ENCODE measurements at regions of chr6 and their contacts with region 1.

Region 1: DNA sequence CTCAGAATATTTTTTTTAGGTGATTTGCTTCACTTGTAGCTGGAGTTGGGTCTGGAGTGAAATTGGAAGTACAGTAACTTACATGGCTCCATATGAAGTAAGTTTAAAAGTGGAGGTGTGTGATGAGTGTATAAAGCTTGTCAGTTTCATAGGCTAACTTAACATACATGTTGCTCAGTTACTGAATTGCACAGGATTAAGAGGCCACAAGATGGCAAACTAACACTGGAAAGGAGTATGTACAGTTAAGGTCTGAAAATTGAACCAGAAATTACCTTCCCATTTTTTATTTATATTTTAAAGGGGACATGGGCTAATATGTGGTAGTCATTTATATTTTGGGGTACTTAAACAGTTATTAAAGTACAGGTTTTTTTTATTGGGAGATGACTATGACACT is 45.3 kb upstream of the SMIM8 start:
- DNase-seq: no peak
- ATAC-seq: peak; percentile 63
- H3K4me3 ChIP-seq: no peak overlapping the region
- H3K27ac ChIP-seq: no peak overlapping the region
- H3K4me1 ChIP-seq: no peaks in the 10 kb centered on the region
- H3K27me3 ChIP-seq: no peaks in the 10 kb centered on the region
- CTCF ChIP-seq: peak in 2 of 3 experiments; percentile 21 to 41; a peak in 2 of 6 replicates
- EP300 ChIP-seq: no peak
- POLR2A ChIP-seq: no peak
- RAD21 ChIP-seq: peak; percentile 46

Region 2: DNA sequence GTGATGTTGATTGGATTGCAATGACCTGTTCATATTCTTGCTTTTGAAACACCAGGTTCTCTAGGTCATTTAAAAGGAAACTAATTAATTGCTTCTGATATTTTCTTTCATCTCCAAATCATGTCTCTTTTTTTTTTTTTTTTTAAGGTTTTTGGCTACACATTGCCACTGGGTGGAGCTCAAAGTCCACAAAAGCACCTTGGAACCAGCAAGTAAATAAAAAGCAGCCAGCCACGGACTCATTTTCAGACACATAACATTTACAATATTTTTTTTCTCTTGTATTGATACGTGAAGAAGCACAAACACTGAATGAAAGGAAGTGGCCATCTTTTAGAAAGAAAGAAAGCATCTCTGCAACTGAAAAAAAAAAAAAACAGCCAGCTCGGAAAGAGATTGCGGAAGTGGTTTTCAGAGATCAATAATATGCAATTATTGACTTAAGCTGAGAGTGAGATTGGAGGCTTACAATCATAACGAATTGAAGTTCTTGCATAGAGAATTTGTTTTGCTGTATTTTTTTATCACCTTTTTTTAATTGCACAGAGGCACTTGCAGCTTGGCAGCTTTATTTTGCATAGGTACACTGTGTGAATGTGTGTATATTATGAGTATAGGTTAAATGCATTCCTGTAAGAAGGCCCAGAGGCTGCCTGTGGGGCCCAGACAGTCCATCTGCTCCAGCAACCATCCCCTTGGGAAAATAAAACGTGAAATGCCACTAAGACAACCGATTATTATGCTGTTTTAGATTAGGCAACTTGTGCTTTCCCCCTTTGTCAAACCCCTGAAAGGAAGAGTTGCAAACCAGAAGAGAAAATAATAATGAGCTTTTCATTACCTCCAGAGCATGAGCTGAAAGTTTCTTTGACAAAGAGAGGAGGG is 210.4 kb before region 1 on chr6:
- CTCF ChIA-PET with region 1: interaction called, 7 read pairs
- POLR2A ChIA-PET with region 1: no interaction called
- RAD21 ChIA-PET with region 1: no interaction called
- SMC1A ChIA-PET with region 1: no interaction called
- in situ Hi-C with region 1: no loop called
- intact Hi-C with region 1: loop called (anchors 10 kb)
- DNase-seq: peak; percentile 28
- ATAC-seq: peak; percentile 53; the same call in 2 of the 3 replicates
- H3K4me3 ChIP-seq: no peak overlapping the region
- H3K27ac ChIP-seq: no peak overlapping the region
- H3K4me1 ChIP-seq: peaks cover 4% of the 10 kb centered on the region
- H3K27me3 ChIP-seq: no peaks in the 10 kb centered on the region
- CTCF ChIP-seq: peak; percentile 44 to 77 (median 62); a peak in 5 of 6 replicates
- EP300 ChIP-seq: no peak
- POLR2A ChIP-seq: no peak
- RAD21 ChIP-seq: peak; percentile 89

Measured in GM12878 (cell line).